Heart left ventricle (tissue), 16 donors: ENCODE measurements at regions of chr19 and their contacts with region 1.

Region 1: GRCh38 chr19:3618144-3618810 is 8.3 kb downstream of the CACTIN start:
- DNase-seq: peak; percentile 72 to 86 (median 73)
- ATAC-seq: peak; percentile 55 to 90 (median 78)
- H3K4me3 ChIP-seq: peak overlapping the region in 10 of 12 donors; percentile 2 to 51 (median 30)
- H3K27ac ChIP-seq: peak overlapping the region in 9 of 12 donors; percentile 19 to 70 (median 49)
- H3K4me1 ChIP-seq: peaks cover 0 to 17% (median 6%) of the 10 kb centered on the region in 12 donors
- H3K27me3 ChIP-seq: no peaks in the 10 kb centered on the region
- CTCF ChIP-seq: peak; percentile 92 to 98 (median 96)
- POLR2A ChIP-seq: peak in 1 of 2 donors; percentile 13

Region 2: DNA sequence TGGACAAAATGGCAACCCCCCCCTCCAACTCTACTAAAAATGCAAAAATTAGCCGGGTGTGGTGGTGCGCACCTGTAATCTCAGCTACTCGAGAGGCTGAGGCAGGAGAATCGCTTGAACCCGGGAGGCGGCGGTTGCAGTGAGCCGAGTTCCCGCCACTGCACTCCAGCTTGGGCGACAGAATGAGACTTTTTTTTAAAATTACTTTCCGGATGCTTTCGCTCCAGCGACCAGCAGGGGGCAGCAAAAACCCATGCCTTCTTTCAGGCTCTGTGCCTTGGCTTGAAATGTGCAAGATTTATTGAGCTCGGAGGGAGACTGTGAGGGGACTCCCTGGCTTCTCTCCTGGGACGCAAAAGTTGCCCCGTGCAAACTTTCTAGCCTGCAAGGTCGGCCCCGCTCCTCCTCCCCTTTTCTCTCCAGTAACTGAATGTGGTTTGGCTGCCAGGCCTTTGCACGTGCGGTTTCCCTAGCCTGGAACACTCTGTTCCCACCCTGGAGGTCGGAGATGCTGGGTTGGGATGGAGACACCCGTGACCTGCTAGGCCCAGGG is 313.3 kb before region 1 on chr19:
- intact Hi-C with region 1: loop called in 2 of 10 experiments (anchors 5 to 10 kb)
- DNase-seq: peak; percentile 51 to 81 (median 62)
- ATAC-seq: peak; percentile 45 to 69 (median 64)
- H3K4me3 ChIP-seq: no peak overlapping the region
- H3K27ac ChIP-seq: no peak overlapping the region
- H3K4me1 ChIP-seq: peaks cover 0 to 10% (median 1%) of the 10 kb centered on the region in 12 donors
- H3K27me3 ChIP-seq: peaks cover 0 to 59% (median 14%) of the 10 kb centered on the region in 9 donors
- CTCF ChIP-seq: peak; percentile 76 to 92 (median 89)
- POLR2A ChIP-seq: no peak

Region 3: GRCh38 chr19:3413796-3414327 is 204.4 kb before region 1 on chr19:
- intact Hi-C with region 1: no loop called
- DNase-seq: no peak
- ATAC-seq: no peak
- H3K4me3 ChIP-seq: no peak overlapping the region
- H3K27ac ChIP-seq: peak overlapping the region in 1 of 12 donors; percentile 99
- H3K4me1 ChIP-seq: peaks cover 0 to 21% (median 10%) of the 10 kb centered on the region in 12 donors
- H3K27me3 ChIP-seq: no peaks in the 10 kb centered on the region
- CTCF ChIP-seq: no peak
- POLR2A ChIP-seq: no peak

Region 4: GRCh38 chr19:3544742-3545668 is 73.3 kb before region 1 on chr19:
- intact Hi-C with region 1: loop called in 6 of 10 experiments (anchors 1 to 10 kb)
- DNase-seq: peak; percentile 62 to 87 (median 68)
- ATAC-seq: peak; percentile 18 to 69 (median 62)
- H3K4me3 ChIP-seq: no peak overlapping the region
- H3K27ac ChIP-seq: no peak overlapping the region
- H3K4me1 ChIP-seq: peaks cover 0 to 9% (median 0%) of the 10 kb centered on the region in 12 donors
- H3K27me3 ChIP-seq: no peaks in the 10 kb centered on the region
- CTCF ChIP-seq: peak; percentile 74 to 97 (median 90)
- POLR2A ChIP-seq: no peak

Region 5: DNA sequence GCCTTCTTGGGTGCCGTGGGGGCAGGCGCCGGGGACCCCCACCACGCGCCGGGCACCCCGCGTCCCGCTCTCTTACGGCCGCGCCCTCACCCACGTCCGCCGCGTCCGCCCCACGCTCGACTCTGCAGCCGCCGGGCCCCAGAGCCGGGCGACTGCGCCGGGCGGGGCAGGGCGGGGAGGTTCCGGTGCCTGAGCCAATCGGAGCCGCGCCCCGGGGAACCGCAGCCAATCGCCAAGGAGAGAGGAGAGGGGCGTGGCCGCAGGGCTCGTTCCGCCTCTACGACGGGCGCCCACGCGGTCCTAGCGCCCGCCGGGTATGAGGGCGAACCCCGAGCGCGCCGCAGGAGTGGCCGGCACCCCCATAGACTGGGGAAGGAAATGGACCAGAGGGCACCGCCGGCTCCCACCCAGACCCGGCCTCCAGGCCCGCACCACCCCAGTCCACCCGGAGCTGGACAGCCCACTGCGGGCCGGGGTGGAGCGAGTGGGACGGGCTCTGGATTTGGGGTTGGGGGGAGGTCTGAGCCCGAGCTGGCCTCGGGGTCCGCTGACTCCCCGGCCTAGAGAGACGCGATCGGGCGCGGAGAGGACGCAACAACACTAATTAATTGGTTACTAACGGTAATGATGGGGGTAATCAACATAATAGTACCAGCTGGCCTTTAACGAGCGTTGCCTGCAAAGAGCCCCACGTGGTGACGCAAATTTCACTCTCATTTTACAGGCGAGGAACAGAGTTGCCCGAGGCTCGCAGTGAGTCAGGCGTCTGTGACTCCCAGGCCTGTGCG is 60.6 kb before region 1 on chr19 and contains the start of gene MFSD12:
- intact Hi-C with region 1: loop called in 3 of 10 experiments (anchors 5 to 10 kb)
- DNase-seq: peak; percentile 96 to 98 (median 96)
- ATAC-seq: peak; percentile 97 to 98 (median 98)
- H3K4me3 ChIP-seq: peak within 1 kb of the TSS; percentile 66 to 99 (median 91)
- H3K27ac ChIP-seq: peak within 1 kb of the TSS; percentile 32 to 86 (median 74)
- H3K4me1 ChIP-seq: peaks cover 0 to 51% (median 28%) of the 10 kb centered on the region in 12 donors
- H3K27me3 ChIP-seq: no peaks in the 10 kb centered on the region
- CTCF ChIP-seq: no peak
- POLR2A ChIP-seq: peak in 1 of 2 donors; percentile 92
- total RNA-seq, gene MFSD12: 15.7 to 62.8 (median 23.4) TPM

Region 6: DNA sequence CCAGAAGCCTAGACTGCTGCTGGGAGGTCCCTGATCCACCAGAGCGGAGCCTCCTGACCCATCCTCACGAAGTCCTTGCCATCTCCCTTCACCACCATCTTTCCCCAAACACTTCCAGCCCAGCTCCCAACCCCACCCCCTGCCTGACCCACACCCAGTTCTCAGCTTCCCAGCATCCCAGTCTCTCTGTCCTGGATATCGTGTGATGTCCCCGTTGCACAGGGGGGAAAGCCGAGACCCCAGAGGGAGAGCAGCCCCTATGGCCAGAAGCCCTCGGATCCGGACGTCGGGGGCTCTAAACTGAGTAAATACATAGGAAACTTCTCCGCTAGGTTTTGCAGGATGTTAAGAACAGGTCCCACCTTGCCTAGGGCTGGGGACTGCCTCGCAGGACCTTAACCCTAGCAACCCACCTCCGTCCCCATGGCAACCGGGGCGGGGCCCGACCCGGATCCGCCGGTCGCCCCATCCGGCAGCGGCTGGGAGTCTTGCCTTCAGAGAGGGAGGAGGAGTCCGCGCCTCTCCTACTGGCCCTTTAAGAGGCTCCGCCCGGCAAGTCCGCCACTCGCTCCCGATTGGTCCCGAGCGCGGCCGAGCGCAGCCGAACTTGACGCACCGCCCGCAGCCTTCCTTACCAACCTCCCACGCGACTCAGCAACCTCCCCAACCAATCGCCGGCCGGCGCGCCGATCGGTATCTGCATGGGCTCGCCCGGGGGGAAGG is 46.0 kb before region 1 on chr19:
- intact Hi-C with region 1: loop called in 1 of 10 experiments (anchors 5 kb)
- DNase-seq: peak; percentile 100
- ATAC-seq: peak; percentile 96 to 98 (median 98)
- H3K4me3 ChIP-seq: peak overlapping the region in 11 of 12 donors; percentile 29 to 97 (median 84)
- H3K27ac ChIP-seq: peak overlapping the region in 8 of 12 donors; percentile 14 to 85 (median 50)
- H3K4me1 ChIP-seq: peaks cover 0 to 37% (median 22%) of the 10 kb centered on the region in 12 donors
- H3K27me3 ChIP-seq: no peaks in the 10 kb centered on the region
- CTCF ChIP-seq: no peak
- POLR2A ChIP-seq: peak in 1 of 2 donors; percentile 11

Region 7: GRCh38 chr19:3580156-3580934 is 37.9 kb before region 1 on chr19:
- intact Hi-C with region 1: loop called in 3 of 10 experiments (anchors 2 to 5 kb)
- DNase-seq: no peak
- ATAC-seq: peak in 1 of 4 donors; percentile 14
- H3K4me3 ChIP-seq: no peak overlapping the region
- H3K27ac ChIP-seq: peak overlapping the region in 2 of 12 donors; percentile 22 to 40
- H3K4me1 ChIP-seq: peaks cover 0 to 17% (median 9%) of the 10 kb centered on the region in 12 donors
- H3K27me3 ChIP-seq: peaks cover 0 to 16% (median 4%) of the 10 kb centered on the region in 9 donors
- CTCF ChIP-seq: no peak
- POLR2A ChIP-seq: no peak

Region 8: GRCh38 chr19:3586124-3586626 is 32.1 kb before region 1 on chr19:
- intact Hi-C with region 1: loop called in 8 of 10 experiments (anchors 1 to 5 kb)
- DNase-seq: no peak
- ATAC-seq: peak in 2 of 4 donors; percentile 7 to 57
- H3K4me3 ChIP-seq: peak overlapping the region; percentile 21 to 65 (median 56)
- H3K27ac ChIP-seq: peak overlapping the region in 5 of 12 donors; percentile 27 to 65 (median 46)
- H3K4me1 ChIP-seq: peaks cover 0 to 22% (median under 1%) of the 10 kb centered on the region in 12 donors
- H3K27me3 ChIP-seq: peaks cover 0 to 30% (median 11%) of the 10 kb centered on the region in 9 donors
- CTCF ChIP-seq: peak; percentile 39 to 71 (median 60)
- POLR2A ChIP-seq: no peak

Region 9: DNA sequence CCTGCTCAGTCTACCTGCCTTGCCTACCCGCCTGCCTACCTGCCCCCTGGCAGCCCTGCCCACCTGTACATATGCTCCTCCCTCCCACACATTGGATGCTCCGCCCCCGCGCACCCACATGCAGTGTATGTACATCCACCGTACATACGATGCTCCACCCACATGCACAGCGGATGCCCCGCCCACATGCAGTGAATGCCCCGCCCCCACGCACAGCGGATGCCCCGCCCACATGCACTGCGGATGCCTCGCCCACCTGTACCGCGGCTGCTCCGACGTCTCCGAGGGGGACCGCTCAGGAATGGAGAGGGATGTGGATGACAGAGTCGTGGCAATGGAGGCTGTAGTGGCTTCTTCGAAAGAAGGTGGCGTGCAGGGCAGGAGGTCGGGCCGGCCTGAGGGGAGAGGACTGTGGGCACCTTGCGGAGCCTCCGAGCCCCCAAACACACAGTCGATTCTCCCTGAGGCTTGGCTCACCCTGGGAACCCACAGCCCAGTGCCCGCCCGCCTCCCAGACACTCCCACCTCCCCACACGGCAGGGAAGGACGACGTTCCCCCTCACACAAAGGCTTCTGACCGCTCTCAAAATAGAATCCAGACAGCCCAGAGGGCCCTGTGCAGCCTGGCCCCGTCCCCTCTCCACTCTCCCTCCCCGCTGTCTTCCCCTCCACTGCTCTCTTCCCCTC is 24.9 kb after region 1 on chr19:
- intact Hi-C with region 1: no loop called
- DNase-seq: no peak
- ATAC-seq: peak in 1 of 4 donors; percentile 2
- H3K4me3 ChIP-seq: no peak overlapping the region
- H3K27ac ChIP-seq: no peak overlapping the region
- H3K4me1 ChIP-seq: peaks cover 0 to 10% (median 0%) of the 10 kb centered on the region in 12 donors
- H3K27me3 ChIP-seq: no peaks in the 10 kb centered on the region
- CTCF ChIP-seq: no peak
- POLR2A ChIP-seq: no peak

Region 10: DNA sequence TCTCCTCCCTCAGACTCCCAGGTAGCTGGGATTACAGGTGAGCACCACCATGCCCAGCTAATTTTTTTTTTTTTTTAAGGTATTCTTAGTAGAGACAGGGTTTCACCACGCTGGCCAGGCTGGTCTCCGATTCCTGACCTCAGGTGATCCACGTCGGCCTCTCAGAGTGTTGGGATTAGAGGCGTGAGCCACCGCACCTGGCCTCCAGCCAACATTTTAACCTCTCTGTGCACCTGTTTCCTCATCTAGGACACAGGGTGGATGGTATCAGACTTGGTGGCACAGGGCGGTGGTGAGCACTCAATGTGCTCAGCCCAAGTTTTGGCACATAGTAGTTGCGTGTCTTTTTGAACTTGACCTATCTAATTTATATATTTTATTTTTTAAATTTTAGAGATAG is 130.7 kb after region 1 on chr19:
- intact Hi-C with region 1: no loop called
- DNase-seq: no peak
- ATAC-seq: no peak
- H3K4me3 ChIP-seq: no peak overlapping the region
- H3K27ac ChIP-seq: no peak overlapping the region
- H3K4me1 ChIP-seq: no peaks in the 10 kb centered on the region
- H3K27me3 ChIP-seq: peaks cover 0 to 4% (median 0%) of the 10 kb centered on the region in 9 donors
- CTCF ChIP-seq: no peak
- POLR2A ChIP-seq: no peak